ENCODE measurements at regions of chr2 and their contacts with region 1.

Region 1: DNA sequence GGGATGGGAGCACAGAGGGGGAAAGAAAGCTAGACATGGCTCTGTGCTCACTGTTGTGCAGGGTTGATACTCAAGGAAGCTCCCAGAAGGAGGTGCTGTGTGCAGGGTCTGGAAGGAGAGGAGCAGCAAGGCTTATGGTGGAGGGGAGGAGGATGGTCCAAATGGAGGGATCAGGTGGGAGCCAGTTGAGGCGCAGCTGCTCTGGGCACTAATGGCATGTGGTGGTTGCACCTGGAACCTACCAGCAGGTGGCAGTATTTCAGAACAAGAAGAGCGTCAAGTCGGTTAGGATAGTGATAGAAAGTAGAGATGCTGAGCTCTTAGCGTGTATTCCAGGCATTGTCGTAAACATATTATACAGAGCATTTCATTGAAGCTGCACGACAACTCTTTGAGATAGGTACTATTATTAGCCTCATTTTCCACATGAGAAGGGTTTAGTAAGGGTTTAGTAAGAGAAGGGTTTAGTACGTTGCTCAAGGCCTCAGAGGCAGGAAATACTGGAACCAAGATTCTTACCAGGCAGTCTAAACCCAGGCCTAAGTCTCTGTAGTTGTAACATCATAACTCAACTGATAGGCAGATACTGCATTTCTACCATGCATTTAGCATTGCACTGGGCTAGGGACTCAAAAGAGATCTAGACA is 223.7 kb downstream of the CYP26B1 start:
- DNase-seq: peak; percentile 65
- ATAC-seq: peak; percentile 72
- H3K4me3 ChIP-seq: no peak overlapping the region
- H3K27ac ChIP-seq: no peak overlapping the region
- H3K4me1 ChIP-seq: no peaks in the 10 kb centered on the region
- H3K27me3 ChIP-seq: peaks cover 12% of the 10 kb centered on the region
- CTCF ChIP-seq: peak; percentile 76
- POLR2A ChIP-seq: no peak
- RAD21 ChIP-seq: peak; percentile 67

Region 2: DNA sequence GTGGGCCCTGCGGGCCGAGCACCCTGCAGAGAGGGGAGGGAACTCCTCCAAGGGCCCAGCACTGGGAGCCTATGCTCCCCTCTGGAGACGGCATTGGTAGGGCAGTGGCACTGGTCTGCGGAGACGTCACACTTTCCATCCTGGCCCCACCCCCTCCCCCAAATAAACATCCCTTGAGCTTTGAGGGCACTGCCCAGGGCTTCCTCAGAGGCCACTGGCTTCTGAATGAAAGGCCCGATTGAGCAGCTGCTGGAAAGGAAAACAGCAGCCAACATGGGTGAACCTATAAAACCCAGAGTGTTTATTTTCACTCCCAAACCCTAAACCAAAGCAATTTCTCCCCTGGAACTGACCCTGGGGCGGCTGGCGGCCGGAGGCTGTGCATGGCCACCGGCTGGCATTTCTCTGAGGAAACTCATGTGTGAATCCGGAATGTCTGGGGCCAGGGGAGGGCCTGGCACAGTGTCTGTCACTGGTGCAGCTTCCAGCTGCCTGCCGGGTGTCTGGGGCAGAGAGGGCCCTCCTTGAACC is 331.8 kb before region 1 on chr2:
- CTCF ChIA-PET with region 1: no interaction called
- POLR2A ChIA-PET with region 1: no interaction called
- dilution Hi-C with region 1: no loop called
- in situ Hi-C with region 1: no loop called
- intact Hi-C with region 1: no loop called
- DNase-seq: no peak
- ATAC-seq: no peak; the same call in 1 of the 2 replicates
- H3K4me3 ChIP-seq: no peak overlapping the region
- H3K27ac ChIP-seq: no peak overlapping the region
- H3K4me1 ChIP-seq: no peaks in the 10 kb centered on the region
- H3K27me3 ChIP-seq: peaks cover 30% of the 10 kb centered on the region
- CTCF ChIP-seq: no peak
- POLR2A ChIP-seq: no peak
- RAD21 ChIP-seq: no peak

Region 3: DNA sequence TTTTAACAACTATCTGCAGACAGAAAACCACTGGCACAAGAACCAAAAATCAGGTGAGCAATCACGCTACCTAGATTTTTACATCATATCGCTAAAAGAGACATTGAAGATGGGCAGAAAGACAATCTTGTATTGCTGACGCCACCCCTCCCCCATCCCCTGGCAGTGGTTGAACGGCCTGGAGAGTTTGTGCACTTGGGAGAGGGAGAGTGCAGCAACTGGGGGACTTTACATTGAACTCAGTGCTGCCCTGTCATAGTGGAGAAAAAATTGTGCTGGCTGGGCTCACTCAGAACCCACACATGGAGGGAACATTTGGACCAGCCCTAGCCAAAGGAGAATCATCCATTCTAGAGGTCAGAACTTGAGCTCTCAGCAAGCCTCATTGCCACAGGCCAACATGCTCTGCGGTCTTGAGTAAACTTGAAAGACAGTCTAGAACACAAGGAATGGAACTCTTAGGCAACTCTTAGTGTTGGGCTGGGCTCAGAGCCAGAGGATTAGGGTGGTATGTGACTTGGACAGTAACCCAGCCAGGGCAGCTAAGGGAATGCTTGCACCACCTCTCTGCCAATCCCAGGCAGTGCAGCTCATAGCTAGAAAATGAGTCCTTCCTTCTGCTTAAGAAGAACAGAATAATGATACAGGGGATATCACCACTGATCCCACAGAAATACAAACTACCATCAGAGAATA is 443.7 kb after region 1 on chr2:
- CTCF ChIA-PET with region 1: no interaction called
- POLR2A ChIA-PET with region 1: no interaction called
- dilution Hi-C with region 1: no loop called
- in situ Hi-C with region 1: no loop called
- intact Hi-C with region 1: loop called (anchors 2 kb)
- DNase-seq: peak; percentile 90
- ATAC-seq: peak; percentile 98
- H3K4me3 ChIP-seq: no peak overlapping the region
- H3K27ac ChIP-seq: no peak overlapping the region
- H3K4me1 ChIP-seq: no peaks in the 10 kb centered on the region
- H3K27me3 ChIP-seq: no peaks in the 10 kb centered on the region
- CTCF ChIP-seq: peak; percentile 50
- POLR2A ChIP-seq: no peak
- RAD21 ChIP-seq: peak; percentile 47; the same call in 1 of the 2 replicates